Left ventricle myocardium superior (tissue), 1 donor: ENCODE measurements at regions of chr11 and their contacts with region 1.

Region 1: DNA sequence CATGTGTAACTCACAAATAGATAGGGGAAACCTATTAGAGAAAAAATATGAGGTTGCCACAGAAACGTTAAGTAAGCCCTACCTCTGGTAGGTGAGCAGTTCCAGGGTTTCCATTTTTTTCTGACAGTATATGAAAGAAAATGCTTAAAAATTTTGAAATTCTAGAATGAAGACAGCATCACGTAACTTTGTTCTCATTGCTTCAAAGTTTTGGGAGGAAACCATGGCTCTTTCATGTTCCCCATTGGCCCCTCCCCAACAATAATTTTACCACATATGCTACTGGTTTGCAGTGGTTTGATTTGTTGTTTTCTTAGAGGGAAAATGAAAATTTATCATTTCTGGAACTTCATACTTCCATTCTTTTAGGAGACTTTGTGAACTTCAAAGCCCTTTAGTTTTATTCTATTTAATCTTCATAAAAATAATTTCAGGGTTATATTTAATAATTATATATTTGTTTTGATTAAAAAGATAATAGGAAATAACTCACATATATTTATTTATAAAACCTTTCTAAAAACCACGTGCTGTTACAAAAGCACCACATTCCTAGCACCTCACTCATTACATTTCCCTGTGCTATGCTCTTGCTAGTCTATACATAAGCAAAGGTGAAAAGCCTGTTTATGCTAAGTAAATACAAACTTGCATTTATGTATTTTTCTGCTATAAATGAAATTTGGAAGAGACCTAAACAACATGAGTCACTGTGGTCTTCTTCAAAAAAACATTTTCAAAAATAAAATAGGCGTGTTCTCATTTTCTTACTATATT is 113.4 kb downstream of the CASP12 start:
- DNase-seq: no peak
- ATAC-seq: no peak

Region 2: GRCh38 chr11:104728927-104729326 is 55.9 kb before region 1 on chr11:
- intact Hi-C with region 1: loop called (anchors 10 kb)
- DNase-seq: no peak
- ATAC-seq: no peak